ENCODE measurements at regions of chr6 and their contacts with region 1.

Region 1: DNA sequence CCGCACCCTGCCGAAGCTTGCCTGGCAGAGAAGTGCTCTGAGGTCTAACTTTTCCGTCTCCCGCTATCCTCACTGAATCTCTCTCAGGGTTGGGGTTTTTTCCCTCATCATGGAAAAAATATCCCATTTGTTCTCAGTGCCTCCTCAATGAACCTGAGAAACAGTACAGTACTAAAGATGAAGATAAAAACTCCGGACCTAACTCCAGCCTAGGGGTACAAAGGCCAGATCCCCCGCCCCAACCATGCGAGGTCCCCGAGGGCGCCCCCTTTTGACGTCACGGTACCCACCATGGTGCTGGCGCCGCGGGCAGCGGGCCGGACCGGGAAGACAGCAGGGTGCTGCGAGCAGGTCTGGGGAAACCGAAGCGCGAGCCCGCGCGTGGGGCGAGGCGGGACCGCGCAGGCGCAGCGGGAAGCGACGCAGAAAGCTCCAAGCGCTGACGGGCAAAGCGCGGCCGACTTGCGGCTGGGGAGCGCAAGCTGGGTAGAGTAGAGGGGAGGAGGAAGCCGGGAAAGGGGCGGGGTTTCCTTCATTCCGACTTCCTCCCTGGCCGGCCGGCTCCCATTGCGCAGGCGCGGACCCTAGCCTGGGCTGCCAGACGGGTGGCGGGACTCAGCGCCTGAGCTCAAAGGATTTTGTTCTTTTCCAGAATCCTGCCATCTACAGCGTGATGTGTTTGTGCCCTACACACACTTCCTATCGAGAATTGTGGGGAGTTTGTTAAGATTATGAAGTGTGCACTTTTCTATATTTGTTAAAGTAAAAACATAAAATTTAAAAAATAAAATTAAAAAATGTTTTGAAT is at the start of gene LSM2:
- DNase-seq: peak; percentile 93 to 99 (median 96)
- ATAC-seq: peak; percentile 99
- H3K4me3 ChIP-seq: peak within 1 kb of the TSS; percentile 70
- H3K4me3 Mint-ChIP-seq: peak within 1 kb of the TSS; percentile 86
- H3K27ac ChIP-seq: peak within 1 kb of the TSS; percentile 78 to 83
- H3K27ac Mint-ChIP-seq: peak within 1 kb of the TSS; percentile 87
- H3K4me1 ChIP-seq: peaks cover 28% of the 10 kb centered on the region
- H3K4me1 Mint-ChIP-seq: peaks cover 34% of the 10 kb centered on the region
- H3K27me3 ChIP-seq: no peaks in the 10 kb centered on the region
- H3K27me3 Mint-ChIP-seq: no peaks in the 10 kb centered on the region
- CTCF ChIP-seq: no peak
- total RNA-seq, gene LSM2: 12.6 to 13.7 TPM

Region 2: DNA sequence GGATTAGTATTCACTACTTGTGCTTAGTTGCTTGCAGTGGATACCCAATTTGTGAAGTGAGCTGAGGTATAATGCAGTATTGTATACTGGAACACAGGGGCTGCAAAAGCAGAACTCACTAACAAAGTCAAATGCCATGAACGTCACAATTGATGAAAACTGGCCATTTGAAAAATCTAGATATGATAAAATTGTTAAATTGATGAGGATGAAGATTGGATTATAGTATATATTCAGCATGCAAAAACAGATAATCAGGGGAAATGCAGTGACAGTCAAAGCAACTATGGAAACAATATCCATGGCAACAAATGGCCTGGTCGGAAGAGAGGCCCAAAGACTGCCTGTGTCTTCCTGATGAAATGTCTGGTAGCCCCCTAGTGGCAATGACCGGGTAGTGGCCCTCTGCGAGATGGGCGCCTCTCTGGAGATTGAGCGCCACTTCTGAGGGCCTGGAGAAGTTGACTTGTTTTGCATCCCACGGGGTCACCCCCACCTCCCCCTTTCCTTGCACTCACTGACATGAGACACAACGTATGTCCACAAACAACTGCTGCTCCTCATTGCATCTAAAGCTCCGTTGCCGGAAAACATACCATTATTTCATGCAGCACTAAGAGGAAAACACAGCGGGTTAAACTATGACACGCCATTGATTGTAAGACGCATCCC is 737.9 kb before region 1 on chr6:
- CTCF ChIA-PET with region 1: no interaction called
- POLR2A ChIA-PET with region 1: no interaction called
- intact Hi-C with region 1: no loop called
- DNase-seq: peak; percentile 42 to 84 (median 64)
- ATAC-seq: peak; percentile 91
- H3K4me3 ChIP-seq: no peak overlapping the region
- H3K4me3 Mint-ChIP-seq: no peak overlapping the region
- H3K27ac ChIP-seq: no peak overlapping the region
- H3K27ac Mint-ChIP-seq: no peak overlapping the region
- H3K4me1 ChIP-seq: no peaks in the 10 kb centered on the region
- H3K4me1 Mint-ChIP-seq: no peaks in the 10 kb centered on the region
- H3K27me3 ChIP-seq: no peaks in the 10 kb centered on the region
- H3K27me3 Mint-ChIP-seq: peaks cover 4% of the 10 kb centered on the region
- CTCF ChIP-seq: peak; percentile 81

Region 3: GRCh38 chr6:31702819-31703522 is 103.7 kb before region 1 on chr6 and contains the start of gene ABHD16A:
- CTCF ChIA-PET with region 1: no interaction called
- POLR2A ChIA-PET with region 1: interaction called, 11 read pairs
- intact Hi-C with region 1: no loop called
- DNase-seq: peak; percentile 94 to 99 (median 97)
- ATAC-seq: peak; percentile 91
- H3K4me3 ChIP-seq: peak within 1 kb of the TSS; percentile 67
- H3K4me3 Mint-ChIP-seq: peak within 1 kb of the TSS; percentile 94
- H3K27ac ChIP-seq: peak within 1 kb of the TSS; percentile 95 to 98
- H3K27ac Mint-ChIP-seq: peak within 1 kb of the TSS; percentile 94
- H3K4me1 ChIP-seq: peaks cover 35% of the 10 kb centered on the region
- H3K4me1 Mint-ChIP-seq: peaks cover 33% of the 10 kb centered on the region
- H3K27me3 ChIP-seq: no peaks in the 10 kb centered on the region
- H3K27me3 Mint-ChIP-seq: no peaks in the 10 kb centered on the region
- CTCF ChIP-seq: no peak
- total RNA-seq, gene ABHD16A: 52.3 to 59.3 TPM

Region 4: GRCh38 chr6:31795616-31796298 is 10.9 kb before region 1 on chr6 and contains the start of gene VARS1:
- CTCF ChIA-PET with region 1: interaction called, 27 read pairs
- POLR2A ChIA-PET with region 1: interaction called, 27 read pairs
- intact Hi-C with region 1: no loop called
- DNase-seq: peak; percentile 69 to 94 (median 80)
- ATAC-seq: peak; percentile 79
- H3K4me3 ChIP-seq: peak within 1 kb of the TSS; percentile 77
- H3K4me3 Mint-ChIP-seq: peak within 1 kb of the TSS; percentile 97
- H3K27ac ChIP-seq: peak within 1 kb of the TSS; percentile 81 to 90
- H3K27ac Mint-ChIP-seq: peak within 1 kb of the TSS; percentile 54
- H3K4me1 ChIP-seq: peaks cover 49% of the 10 kb centered on the region
- H3K4me1 Mint-ChIP-seq: peaks cover 38% of the 10 kb centered on the region
- H3K27me3 ChIP-seq: no peaks in the 10 kb centered on the region
- H3K27me3 Mint-ChIP-seq: no peaks in the 10 kb centered on the region
- CTCF ChIP-seq: peak; percentile 76
- total RNA-seq, gene VARS1: 43.9 to 44.2 TPM

Region 5: GRCh38 chr6:31822036-31822821 is 15.6 kb after region 1 on chr6:
- CTCF ChIA-PET with region 1: interaction called, 5 read pairs
- POLR2A ChIA-PET with region 1: interaction called, 24 read pairs
- intact Hi-C with region 1: loop called in 1 of 2 experiments (anchors 2 kb)
- DNase-seq: peak in 13 of 14 experiments; percentile 30 to 85 (median 55)
- ATAC-seq: peak; percentile 60
- H3K4me3 ChIP-seq: peak overlapping the region; percentile 63
- H3K4me3 Mint-ChIP-seq: peak overlapping the region; percentile 94
- H3K27ac ChIP-seq: peak overlapping the region; percentile 83 to 84
- H3K27ac Mint-ChIP-seq: peak overlapping the region; percentile 94
- H3K4me1 ChIP-seq: peaks cover 58% of the 10 kb centered on the region
- H3K4me1 Mint-ChIP-seq: peaks cover 62% of the 10 kb centered on the region
- H3K27me3 ChIP-seq: no peaks in the 10 kb centered on the region
- H3K27me3 Mint-ChIP-seq: no peaks in the 10 kb centered on the region
- CTCF ChIP-seq: no peak

Region 6: DNA sequence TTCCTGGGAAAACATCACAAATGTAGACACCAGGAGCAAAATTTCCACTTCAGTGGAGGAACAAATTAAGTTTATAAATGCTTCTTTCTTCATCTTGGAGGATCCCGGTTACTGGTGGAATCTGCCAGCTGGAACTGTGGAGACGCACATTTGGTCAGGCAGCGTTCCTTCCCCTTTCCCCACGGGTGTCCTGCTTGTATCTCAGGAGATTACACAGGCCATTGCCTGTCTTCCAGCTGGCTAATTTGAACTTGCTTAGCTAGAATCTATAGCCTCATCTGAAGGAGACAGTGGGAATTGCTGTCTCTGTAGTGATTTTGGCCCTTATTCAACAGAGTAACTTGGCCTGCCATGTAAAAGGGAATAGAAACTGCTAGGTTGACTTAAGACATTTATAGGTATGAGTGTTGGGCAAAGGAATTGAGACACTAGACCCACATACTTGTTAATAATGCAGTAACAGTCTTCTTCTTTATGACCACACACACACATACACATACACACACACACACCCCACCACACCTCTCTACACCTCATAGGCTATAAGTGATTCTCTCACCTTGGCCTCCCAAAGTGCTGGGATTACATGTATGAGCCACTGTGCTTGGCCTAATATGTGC is 530.6 kb after region 1 on chr6:
- CTCF ChIA-PET with region 1: no interaction called
- POLR2A ChIA-PET with region 1: no interaction called
- intact Hi-C with region 1: no loop called
- DNase-seq: no peak
- ATAC-seq: no peak
- H3K4me3 ChIP-seq: no peak overlapping the region
- H3K4me3 Mint-ChIP-seq: no peak overlapping the region
- H3K27ac ChIP-seq: no peak overlapping the region
- H3K27ac Mint-ChIP-seq: no peak overlapping the region
- H3K4me1 ChIP-seq: no peaks in the 10 kb centered on the region
- H3K4me1 Mint-ChIP-seq: no peaks in the 10 kb centered on the region
- H3K27me3 ChIP-seq: no peaks in the 10 kb centered on the region
- H3K27me3 Mint-ChIP-seq: peaks cover 3% of the 10 kb centered on the region
- CTCF ChIP-seq: no peak

Region 7: DNA sequence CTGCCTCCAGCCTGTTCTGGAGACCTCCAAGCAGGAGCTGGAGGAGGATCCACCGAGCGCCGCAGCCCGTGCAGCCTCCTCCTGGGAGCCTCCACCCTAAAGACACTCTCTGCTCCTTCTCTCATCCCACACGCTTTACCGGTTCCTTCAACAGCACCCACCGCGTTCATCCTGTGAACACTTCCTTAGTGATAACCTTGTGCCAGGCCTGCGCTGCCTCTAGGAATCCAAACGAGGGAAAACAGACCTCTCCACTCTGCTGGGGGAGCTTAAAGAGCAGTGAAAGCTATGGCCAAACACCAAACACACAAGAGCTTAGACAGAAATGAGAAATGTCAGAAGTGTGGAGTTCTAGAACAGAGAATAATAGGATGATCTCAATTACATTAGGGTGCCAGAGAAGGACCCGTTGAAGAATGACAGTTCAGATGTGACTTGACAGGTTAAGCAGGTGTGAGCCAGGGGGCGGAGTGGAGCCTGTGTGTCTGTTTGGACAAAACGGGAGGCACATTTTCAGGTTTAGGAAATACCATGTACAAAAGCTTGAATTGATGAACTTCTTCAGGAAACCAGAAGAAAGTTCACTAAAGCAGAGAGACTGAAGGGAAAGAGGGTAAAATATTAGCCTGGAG is 751.9 kb after region 1 on chr6:
- CTCF ChIA-PET with region 1: no interaction called
- POLR2A ChIA-PET with region 1: no interaction called
- intact Hi-C with region 1: no loop called
- DNase-seq: no peak
- ATAC-seq: no peak
- H3K4me3 ChIP-seq: no peak overlapping the region
- H3K4me3 Mint-ChIP-seq: no peak overlapping the region
- H3K27ac ChIP-seq: no peak overlapping the region
- H3K27ac Mint-ChIP-seq: no peak overlapping the region
- H3K4me1 ChIP-seq: no peaks in the 10 kb centered on the region
- H3K4me1 Mint-ChIP-seq: no peaks in the 10 kb centered on the region
- H3K27me3 ChIP-seq: no peaks in the 10 kb centered on the region
- H3K27me3 Mint-ChIP-seq: peaks cover 14% of the 10 kb centered on the region
- CTCF ChIP-seq: no peak